Left lung (tissue), 14 donors: ENCODE measurements at regions of chr12 and their contacts with region 1.

Region 1: GRCh38 chr12:32302218-32303173 is 96.9 kb upstream of the FGD4 start:
- DNase-seq: peak in 1 of 4 donors; percentile 17
- ATAC-seq: peak; percentile 53
- H3K4me3 ChIP-seq: no peak overlapping the region
- H3K27ac ChIP-seq: no peak overlapping the region
- H3K4me1 ChIP-seq: no peaks in the 10 kb centered on the region
- H3K27me3 ChIP-seq: no peaks in the 10 kb centered on the region
- CTCF ChIP-seq: no peak

Region 2: DNA sequence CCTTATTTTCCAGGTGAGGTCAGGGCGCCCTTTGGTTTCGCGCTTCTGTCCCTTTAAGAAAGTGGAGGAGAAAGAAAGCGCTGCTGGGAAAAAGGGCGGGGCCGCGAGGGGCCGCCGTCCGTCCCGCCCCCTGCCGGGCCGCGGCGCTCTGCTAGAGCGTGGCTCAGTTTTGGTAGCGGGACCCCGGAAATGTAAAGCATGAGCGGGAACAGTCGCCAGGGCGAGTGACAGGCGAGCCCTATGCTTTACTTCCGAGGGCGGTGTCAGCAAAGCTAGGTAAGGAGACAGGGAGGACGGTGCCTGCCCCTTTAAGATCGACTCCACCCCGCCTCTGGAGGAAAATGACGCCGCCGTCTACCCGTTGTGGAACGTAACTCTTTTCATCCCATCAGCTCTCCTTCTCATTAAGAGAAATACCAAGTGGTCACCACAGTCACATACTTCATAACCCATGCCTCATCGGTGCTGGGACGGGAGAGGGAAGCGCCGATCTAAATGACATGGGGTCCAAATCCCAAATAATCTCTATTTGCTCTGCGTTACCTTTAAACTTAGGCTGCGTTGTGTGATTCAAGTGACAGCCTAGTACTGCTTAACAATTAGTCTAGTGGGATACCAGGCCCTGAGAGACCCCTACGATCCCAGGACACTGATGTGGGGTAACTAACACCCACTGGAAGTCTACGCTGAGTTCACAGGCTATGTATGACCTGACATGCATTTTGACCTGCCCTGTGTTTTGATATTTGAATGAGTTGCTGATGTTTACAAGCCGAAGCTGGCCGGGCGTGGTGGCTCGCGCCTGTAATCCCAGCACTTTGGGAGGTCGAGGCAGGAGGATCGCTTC is 643.2 kb before region 1 on chr12 and contains the start of gene ETFBKMT:
- intact Hi-C with region 1: loop called in 1 of 2 experiments (anchors 10 kb)
- DNase-seq: peak; percentile 83 to 94 (median 92)
- ATAC-seq: peak; percentile 97
- H3K4me3 ChIP-seq: peak within 1 kb of the TSS; percentile 61 to 71
- H3K27ac ChIP-seq: peak within 1 kb of the TSS; percentile 96 to 98
- H3K4me1 ChIP-seq: peaks cover 0 to 6% of the 10 kb centered on the region in 2 donors
- H3K27me3 ChIP-seq: peaks cover 0 to 4% of the 10 kb centered on the region in 2 donors
- CTCF ChIP-seq: peak; percentile 17 to 54
- polyA plus RNA-seq, gene ETFBKMT: 3.4 to 4.0 (median 3.6) TPM

Region 3: GRCh38 chr12:32069071-32069470 is 233.4 kb before region 1 on chr12:
- intact Hi-C with region 1: loop called in 1 of 2 experiments (anchors 10 kb)
- DNase-seq: no peak
- ATAC-seq: no peak
- H3K4me3 ChIP-seq: no peak overlapping the region
- H3K27ac ChIP-seq: no peak overlapping the region
- H3K4me1 ChIP-seq: no peaks in the 10 kb centered on the region
- H3K27me3 ChIP-seq: no peaks in the 10 kb centered on the region
- CTCF ChIP-seq: no peak

Region 4: GRCh38 chr12:32264961-32265360 is 37.5 kb before region 1 on chr12:
- intact Hi-C with region 1: no loop called
- DNase-seq: peak in 1 of 4 donors; percentile 19
- ATAC-seq: no peak
- H3K4me3 ChIP-seq: no peak overlapping the region
- H3K27ac ChIP-seq: no peak overlapping the region
- H3K4me1 ChIP-seq: no peaks in the 10 kb centered on the region
- H3K27me3 ChIP-seq: no peaks in the 10 kb centered on the region
- CTCF ChIP-seq: no peak